ENCODE measurements at regions of chr18 and their contacts with region 1.

Region 1: GRCh38 chr18:9869715-9870430 is 15.9 kb upstream of the TXNDC2 start:
- DNase-seq: peak; percentile 72 to 92 (median 84)
- H3K4me3 ChIP-seq: no peak overlapping the region
- H3K27ac ChIP-seq: peak overlapping the region; percentile 67 to 87 (median 74)
- H3K4me1 ChIP-seq: peaks cover 26 to 34% of the 10 kb centered on the region in 2 donors
- H3K27me3 ChIP-seq: no peaks in the 10 kb centered on the region
- CTCF ChIP-seq: no peak
- POLR2A ChIP-seq: no peak

Region 2: GRCh38 chr18:9173770-9174233 is 696.1 kb before region 1 on chr18:
- intact Hi-C with region 1: no loop called
- DNase-seq: no peak
- H3K4me3 ChIP-seq: no peak overlapping the region
- H3K27ac ChIP-seq: no peak overlapping the region
- H3K4me1 ChIP-seq: peaks cover 0 to 18% of the 10 kb centered on the region in 2 donors
- H3K27me3 ChIP-seq: no peaks in the 10 kb centered on the region
- CTCF ChIP-seq: no peak
- POLR2A ChIP-seq: no peak

Region 3: DNA sequence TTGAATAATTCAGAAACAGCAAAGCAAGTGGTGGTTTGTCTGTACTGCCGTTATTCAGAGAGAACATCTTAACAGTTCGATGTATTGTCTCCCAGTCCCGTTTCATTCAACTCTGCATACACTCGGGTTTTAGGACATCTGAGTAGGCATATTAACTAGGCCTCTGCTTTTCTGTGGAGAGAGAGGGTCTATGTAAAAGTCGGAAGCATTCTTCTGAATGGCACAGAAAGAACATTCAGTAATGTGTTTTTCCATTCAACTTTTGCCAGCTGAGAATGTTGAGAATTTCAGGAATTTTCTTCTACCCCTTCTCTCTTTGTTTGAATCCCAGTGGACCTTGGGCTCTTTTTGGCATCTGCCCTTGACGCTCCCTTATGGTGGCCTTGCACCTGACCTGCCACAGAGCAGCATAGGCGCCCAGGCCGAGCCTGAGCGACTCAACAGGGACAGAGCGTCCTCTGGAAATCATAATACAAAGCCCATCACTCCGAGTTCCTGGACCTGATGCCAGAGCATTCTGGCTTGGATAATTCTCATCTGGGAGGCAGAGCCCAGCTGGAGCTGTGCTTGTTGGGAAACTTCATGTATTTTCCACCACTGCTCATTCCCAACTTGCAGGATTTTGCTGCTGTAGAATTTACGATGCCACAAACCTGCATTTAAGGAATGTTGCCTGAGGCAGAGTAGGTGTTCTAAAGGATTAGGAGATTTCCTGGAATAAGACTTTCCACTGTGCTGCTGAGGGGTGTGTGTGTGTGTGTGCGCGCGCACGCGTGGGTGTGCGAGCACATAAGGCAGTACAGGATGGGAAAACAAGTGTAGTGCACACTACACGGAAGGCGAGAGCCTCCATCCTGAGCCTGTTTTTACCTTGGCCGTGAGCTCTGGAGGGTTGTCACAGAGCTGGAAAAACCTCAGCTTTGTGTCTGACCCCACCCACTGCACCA is 61.3 kb before region 1 on chr18:
- intact Hi-C with region 1: loop called in 1 of 2 experiments (anchors 10 kb)
- DNase-seq: peak in 6 of 7 donors; percentile 44 to 86 (median 74)
- H3K4me3 ChIP-seq: no peak overlapping the region
- H3K27ac ChIP-seq: peak overlapping the region; percentile 15 to 90 (median 67)
- H3K4me1 ChIP-seq: peaks cover 27 to 50% of the 10 kb centered on the region in 2 donors
- H3K27me3 ChIP-seq: no peaks in the 10 kb centered on the region
- CTCF ChIP-seq: peak in 4 of 6 experiments; percentile 13 to 33 (median 28)
- POLR2A ChIP-seq: peak in 1 of 2 donors; percentile 19

Region 4: DNA sequence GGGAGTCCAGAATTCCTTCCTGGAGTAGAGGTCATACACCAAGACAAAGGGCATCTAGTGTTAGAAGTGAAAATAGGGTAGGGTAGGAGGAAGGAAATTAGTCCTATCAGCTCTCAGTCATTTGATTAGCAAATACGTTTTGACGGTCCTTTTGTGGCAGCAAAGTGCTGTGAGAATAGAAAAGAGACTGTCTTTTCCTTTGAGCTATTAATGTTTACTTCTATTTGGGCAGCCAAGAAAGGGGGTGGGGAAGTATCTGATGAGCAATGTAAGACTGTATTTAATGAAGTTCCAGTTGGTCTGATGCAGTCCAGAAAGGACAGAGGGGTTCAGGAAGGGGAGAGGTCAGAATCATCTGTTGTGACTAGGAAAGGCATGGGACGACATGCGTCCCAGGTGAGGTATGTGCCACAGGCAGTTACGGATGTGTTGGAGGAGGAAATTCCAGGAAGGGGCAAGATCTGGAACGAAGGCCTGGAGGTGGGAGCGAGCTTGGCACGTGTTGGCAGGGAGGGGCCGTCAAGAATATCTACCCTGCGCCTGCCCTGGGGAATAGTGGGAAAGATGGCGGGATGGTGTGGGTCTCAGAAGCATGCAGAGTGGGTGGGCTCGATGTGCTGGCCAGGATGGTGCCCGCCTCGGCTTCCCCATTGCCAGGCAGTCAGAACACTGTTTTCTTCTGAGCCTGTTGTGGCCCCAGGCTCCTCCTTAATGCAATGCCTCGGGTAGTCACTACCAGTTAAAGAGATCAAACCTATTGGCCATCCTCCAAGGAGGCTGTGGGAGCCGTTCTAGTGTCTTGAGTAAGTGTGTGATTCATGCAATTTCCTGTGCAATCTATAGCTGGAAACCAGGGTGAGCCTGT is 42.0 kb before region 1 on chr18:
- intact Hi-C with region 1: no loop called
- DNase-seq: peak; percentile 67 to 90 (median 85)
- H3K4me3 ChIP-seq: no peak overlapping the region
- H3K27ac ChIP-seq: peak overlapping the region; percentile 43 to 90 (median 76)
- H3K4me1 ChIP-seq: peaks cover 49 to 61% of the 10 kb centered on the region in 2 donors
- H3K27me3 ChIP-seq: no peaks in the 10 kb centered on the region
- CTCF ChIP-seq: no peak
- POLR2A ChIP-seq: peak in 1 of 2 donors; percentile 62

Region 5: GRCh38 chr18:9925369-9925768 is 55.5 kb after region 1 on chr18:
- intact Hi-C with region 1: loop called in 1 of 2 experiments (anchors 10 kb)
- DNase-seq: no peak
- H3K4me3 ChIP-seq: peak overlapping the region in 1 of 4 donors; percentile 13
- H3K27ac ChIP-seq: peak overlapping the region in 4 of 5 donors; percentile 13 to 53 (median 30)
- H3K4me1 ChIP-seq: peaks cover 63 to 100% of the 10 kb centered on the region in 2 donors
- H3K27me3 ChIP-seq: no peaks in the 10 kb centered on the region
- CTCF ChIP-seq: no peak
- POLR2A ChIP-seq: peak in 1 of 2 donors; percentile 16

Region 6: GRCh38 chr18:9961041-9961440 is 91.2 kb after region 1 on chr18:
- intact Hi-C with region 1: no loop called
- DNase-seq: peak in 1 of 7 donors; percentile 30
- H3K4me3 ChIP-seq: no peak overlapping the region
- H3K27ac ChIP-seq: no peak overlapping the region
- H3K4me1 ChIP-seq: peaks cover 0 to 14% of the 10 kb centered on the region in 2 donors
- H3K27me3 ChIP-seq: no peaks in the 10 kb centered on the region
- CTCF ChIP-seq: no peak
- POLR2A ChIP-seq: no peak